Activated B cell treated with CpG ODN at 0.5 μM for 24 hours (primary cell): ENCODE measurements at regions of chr1 and their contacts with region 1.

Region 1: DNA sequence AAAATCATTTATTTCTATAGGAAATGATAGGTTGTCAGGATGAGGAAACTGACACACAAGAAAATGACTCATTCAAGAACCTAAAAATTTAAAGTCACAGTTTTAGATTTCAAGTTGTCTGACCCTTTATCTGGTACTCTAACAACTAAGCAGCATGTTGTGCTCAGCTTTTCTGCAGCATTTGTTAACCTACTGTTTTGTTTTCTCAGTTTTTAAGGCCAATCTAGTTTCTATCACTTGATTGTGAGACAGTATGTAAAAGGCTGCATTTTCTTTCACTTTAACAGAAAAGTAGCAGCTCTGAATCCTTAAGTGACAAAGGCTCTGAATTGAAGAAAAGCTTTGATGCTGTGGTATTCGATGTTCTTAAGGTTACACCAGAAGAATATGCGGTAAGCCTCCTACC is 59.1 kb downstream of the RALGPS2 start:
- DNase-seq: no peak
- ATAC-seq: peak; percentile 29
- H3K4me3 Mint-ChIP-seq: peak overlapping the region; percentile 8
- H3K27ac Mint-ChIP-seq: peak overlapping the region; percentile 81
- H3K4me1 Mint-ChIP-seq: peaks cover 76% of the 10 kb centered on the region
- H3K27me3 Mint-ChIP-seq: no peaks in the 10 kb centered on the region
- CTCF ChIP-seq: no peak

Region 2: GRCh38 chr1:178749581-178750166 is 34.5 kb before region 1 on chr1:
- CTCF ChIA-PET with region 1: no interaction called
- POLR2A ChIA-PET with region 1: no interaction called
- intact Hi-C with region 1: loop called (anchors 5 kb)
- DNase-seq: no peak
- ATAC-seq: peak; percentile 38
- H3K4me3 Mint-ChIP-seq: no peak overlapping the region
- H3K27ac Mint-ChIP-seq: peak overlapping the region; percentile 83
- H3K4me1 Mint-ChIP-seq: peaks cover 64% of the 10 kb centered on the region
- H3K27me3 Mint-ChIP-seq: no peaks in the 10 kb centered on the region
- CTCF ChIP-seq: no peak

Region 3: GRCh38 chr1:178768423-178768822 is 15.7 kb before region 1 on chr1:
- CTCF ChIA-PET with region 1: interaction called, 11 read pairs
- POLR2A ChIA-PET with region 1: no interaction called
- intact Hi-C with region 1: loop called (anchors 2 kb)
- DNase-seq: no peak
- ATAC-seq: peak; percentile 58
- H3K4me3 Mint-ChIP-seq: peak overlapping the region; percentile 32
- H3K27ac Mint-ChIP-seq: peak overlapping the region; percentile 72
- H3K4me1 Mint-ChIP-seq: peaks cover 70% of the 10 kb centered on the region
- H3K27me3 Mint-ChIP-seq: no peaks in the 10 kb centered on the region
- CTCF ChIP-seq: peak; percentile 20

Region 4: DNA sequence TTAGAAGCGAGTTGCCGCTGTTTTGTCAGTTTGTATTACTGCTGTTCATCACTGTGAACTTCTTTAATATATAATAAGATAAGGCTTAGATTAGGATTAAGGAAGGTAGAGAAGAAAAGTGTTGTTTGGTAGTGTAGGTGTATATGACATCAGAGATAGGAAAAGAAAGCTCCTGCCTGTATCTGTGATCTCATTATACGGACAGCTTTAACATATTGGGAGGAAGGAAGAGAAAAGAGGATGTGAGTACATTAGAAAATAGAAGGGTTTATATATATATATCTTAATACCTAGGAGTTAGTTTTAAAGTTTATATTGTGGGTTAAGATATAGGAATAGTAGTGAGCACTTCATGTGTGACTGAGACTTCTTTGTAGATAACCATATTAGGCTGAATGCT is 11.9 kb after region 1 on chr1:
- CTCF ChIA-PET with region 1: no interaction called
- POLR2A ChIA-PET with region 1: interaction called, 4 read pairs
- intact Hi-C with region 1: loop called (anchors 1 kb)
- DNase-seq: no peak
- ATAC-seq: peak; percentile 77
- H3K4me3 Mint-ChIP-seq: peak overlapping the region; percentile 59
- H3K27ac Mint-ChIP-seq: peak overlapping the region; percentile 85
- H3K4me1 Mint-ChIP-seq: peaks cover 62% of the 10 kb centered on the region
- H3K27me3 Mint-ChIP-seq: no peaks in the 10 kb centered on the region
- CTCF ChIP-seq: no peak